ENCODE measurements at regions of chr10 and their contacts with region 1.

Region 1: DNA sequence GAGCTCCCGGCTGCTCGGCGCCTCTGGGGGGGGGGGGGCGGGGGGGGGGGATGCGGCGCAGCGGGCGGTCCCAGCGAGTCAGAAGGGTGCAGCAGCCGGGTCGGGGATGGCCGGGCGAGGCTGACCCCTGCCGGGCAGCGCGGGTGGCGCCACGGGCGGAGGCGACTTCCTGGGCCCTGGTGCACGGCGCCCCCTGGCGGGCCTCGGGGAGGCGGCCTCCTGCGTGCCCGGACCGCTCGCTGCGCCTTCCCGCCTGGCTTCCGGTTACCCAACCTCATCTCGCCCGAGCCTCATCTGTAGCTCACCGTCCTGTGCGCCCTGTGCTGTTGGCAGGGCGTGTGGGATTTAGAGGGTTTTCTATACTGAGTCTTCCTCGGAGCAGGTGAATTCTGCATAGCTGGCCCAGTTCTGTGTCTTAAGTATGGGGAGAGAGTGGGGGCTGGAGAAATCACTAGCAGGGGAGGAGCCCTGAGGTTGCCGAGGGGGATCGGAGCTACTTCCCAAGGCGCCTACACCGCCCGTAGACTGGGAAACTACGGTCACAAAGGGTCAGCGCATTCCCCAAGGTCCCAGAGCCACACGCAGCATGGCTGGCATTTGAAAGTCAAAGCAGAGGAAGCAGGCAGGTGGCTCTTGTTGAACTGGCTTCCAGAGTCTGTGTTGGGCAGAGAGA is 28.3 kb upstream of the WDFY4 start:
- DNase-seq: peak; percentile 93
- CTCF ChIP-seq: peak; percentile 100

Region 2: GRCh38 chr10:48551861-48552591 is 104.4 kb before region 1 on chr10:
- in situ Hi-C with region 1: loop called (anchors 5 kb)
- DNase-seq: peak; percentile 77
- CTCF ChIP-seq: peak; percentile 73

Region 3: DNA sequence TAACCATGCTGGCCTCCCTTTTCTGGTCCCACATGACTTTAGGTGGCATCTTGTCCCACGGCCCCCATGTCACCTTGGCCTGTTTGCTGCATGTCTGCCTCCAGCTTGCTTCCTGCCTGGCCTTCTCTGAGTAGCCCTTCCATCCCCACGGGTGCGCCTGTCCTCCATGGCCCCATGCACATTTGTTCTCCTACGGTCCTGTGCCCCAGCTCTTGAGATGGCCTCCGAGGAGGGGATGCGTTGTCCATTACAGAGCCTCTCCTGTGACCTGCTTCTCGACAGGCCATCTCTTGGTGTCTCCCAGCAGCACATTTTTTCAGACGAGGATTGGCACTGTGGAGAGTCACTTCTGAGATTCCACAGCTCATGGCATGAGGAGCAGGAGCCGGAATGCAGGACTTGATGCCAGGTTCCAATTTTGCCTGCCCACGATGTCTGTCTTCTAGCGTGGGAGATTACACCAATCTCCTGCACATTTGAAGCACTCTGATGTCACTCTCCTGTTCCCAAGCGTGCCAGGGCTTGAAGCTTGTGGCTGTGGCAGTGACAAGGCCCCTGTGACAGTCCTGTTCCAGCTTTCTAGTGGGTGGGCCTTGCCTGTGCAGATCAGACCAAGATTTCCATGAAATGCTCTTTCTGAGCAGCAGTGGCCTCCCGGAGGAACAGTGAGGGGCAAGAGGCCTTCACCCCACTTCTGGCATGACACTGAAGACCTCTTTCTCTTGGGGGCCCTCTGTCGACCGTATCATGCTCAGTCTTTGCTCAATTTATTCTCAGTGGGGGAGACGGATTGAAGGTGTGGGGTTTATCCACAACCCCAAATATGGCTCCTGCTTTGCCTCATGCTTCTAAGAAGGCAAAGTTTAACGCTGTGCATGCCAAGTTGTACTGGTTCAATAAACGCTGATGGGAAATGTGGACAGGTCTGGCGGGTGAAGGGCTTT is 41.7 kb after region 1 on chr10:
- in situ Hi-C with region 1: no loop called
- DNase-seq: no peak
- CTCF ChIP-seq: peak; percentile 26

Region 4: GRCh38 chr10:48708144-48708543 is 51.8 kb after region 1 on chr10:
- in situ Hi-C with region 1: no loop called
- DNase-seq: no peak
- CTCF ChIP-seq: no peak

Region 5: DNA sequence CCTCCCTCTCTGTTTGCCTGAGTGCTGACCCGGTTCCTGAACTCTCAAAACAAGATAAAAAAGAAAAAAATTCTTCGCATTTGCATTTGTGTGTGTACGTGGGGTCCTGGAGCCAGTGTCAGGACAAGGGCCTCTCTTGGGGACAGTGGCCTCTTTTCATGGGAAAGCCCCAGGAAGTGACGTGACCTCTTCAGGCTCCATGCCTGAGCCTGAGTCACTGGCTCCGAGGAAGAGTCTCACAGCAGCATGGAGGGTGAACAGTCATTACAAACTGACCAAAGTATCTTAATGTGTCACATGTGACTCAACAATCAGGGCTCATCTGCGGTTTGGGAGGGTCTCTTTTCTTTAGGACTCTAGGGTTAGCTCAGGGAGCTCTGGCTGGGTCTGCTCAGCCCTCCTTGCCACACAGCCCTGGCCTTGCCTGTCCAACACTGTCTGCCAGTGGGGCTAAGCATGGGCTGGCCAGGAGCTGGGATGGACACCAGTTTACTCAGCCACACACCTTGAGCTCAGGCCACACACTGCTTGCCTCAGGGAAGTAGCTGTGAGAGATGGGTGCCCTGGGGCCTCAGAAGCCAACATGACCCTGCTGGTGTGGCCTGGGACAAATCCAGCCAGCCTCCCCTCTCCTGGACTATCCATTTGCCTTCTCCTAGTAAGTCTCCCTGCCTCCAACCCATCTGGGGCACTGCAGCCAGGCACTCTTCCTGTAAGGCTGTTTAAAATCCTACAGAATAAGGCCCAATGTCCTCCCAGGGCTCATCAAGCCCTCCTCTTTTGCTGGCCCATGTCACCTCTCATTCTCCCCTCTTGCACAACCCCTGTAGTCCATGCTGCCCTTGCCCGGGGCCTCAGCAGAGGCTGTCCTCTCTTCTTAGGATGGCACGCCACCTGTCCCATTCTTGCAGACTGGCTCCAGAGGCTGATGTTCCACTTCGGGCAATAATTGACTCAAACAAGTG is 521.3 kb after region 1 on chr10:
- in situ Hi-C with region 1: loop called (anchors 25 kb)
- DNase-seq: peak; percentile 81
- CTCF ChIP-seq: no peak

Measured in GM13977 (cell line).